Activated CD4-positive, alpha-beta T cell treated with anti-CD3 and anti-CD28 coated beads for 36 hours (primary cell): ENCODE measurements at regions of chr2 and their contacts with region 1.

Region 1: GRCh38 chr2:96085541-96086355 is 30.6 kb downstream of the ADRA2B start:
- DNase-seq: no peak
- ATAC-seq: no peak
- H3K4me3 Mint-ChIP-seq: no peak overlapping the region
- H3K27ac Mint-ChIP-seq: no peak overlapping the region
- H3K4me1 Mint-ChIP-seq: peaks cover 2% of the 10 kb centered on the region
- H3K27me3 Mint-ChIP-seq: peaks cover 2% of the 10 kb centered on the region

Region 2: GRCh38 chr2:96065381-96065930 is 20.3 kb before region 1 on chr2:
- CTCF ChIA-PET with region 1: no interaction called
- POLR2A ChIA-PET with region 1: no interaction called
- intact Hi-C with region 1: no loop called
- DNase-seq: no peak
- ATAC-seq: no peak
- H3K4me3 Mint-ChIP-seq: no peak overlapping the region
- H3K27ac Mint-ChIP-seq: no peak overlapping the region
- H3K4me1 Mint-ChIP-seq: peaks cover 5% of the 10 kb centered on the region
- H3K27me3 Mint-ChIP-seq: no peaks in the 10 kb centered on the region

Region 3: DNA sequence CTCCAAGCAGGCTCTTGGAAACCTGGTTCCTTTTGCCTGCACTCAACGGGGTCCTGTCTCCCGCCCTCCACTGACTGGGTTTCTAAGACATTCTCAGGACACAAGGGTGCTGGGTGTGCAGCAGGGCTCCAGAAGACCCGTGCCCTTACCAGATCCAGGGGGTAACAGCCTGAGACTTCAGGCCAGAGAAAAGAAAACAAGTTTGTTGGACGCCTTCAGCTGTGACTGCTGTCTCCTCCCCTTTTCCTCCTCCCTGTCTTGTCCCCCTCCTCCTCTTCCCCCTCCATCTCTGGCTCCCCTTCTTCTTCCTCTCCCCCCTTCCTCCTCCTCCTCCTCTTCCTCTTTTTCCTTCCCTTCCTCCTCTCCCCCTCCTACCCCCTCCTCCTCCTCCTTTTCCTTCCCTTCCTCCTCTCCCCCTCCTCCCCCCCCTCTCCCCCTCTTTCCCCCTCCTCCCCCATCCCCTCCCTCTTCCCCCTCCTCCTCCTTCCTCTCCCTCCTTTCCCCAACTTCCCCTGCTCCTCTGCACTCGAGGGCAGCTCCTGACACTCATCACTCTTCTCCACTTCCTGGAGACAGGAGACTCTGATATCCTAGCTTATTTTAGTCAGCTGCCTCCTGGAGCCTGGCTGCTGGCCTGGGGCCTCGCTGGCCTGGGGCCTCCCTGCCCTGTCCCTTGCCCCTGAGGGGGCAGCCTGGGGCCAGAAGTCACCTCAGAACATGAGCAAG is 18.2 kb after region 1 on chr2:
- CTCF ChIA-PET with region 1: no interaction called
- POLR2A ChIA-PET with region 1: no interaction called
- intact Hi-C with region 1: loop called in 1 of 2 experiments (anchors 2 kb)
- DNase-seq: no peak
- ATAC-seq: no peak
- H3K4me3 Mint-ChIP-seq: no peak overlapping the region
- H3K27ac Mint-ChIP-seq: no peak overlapping the region
- H3K4me1 Mint-ChIP-seq: no peaks in the 10 kb centered on the region
- H3K27me3 Mint-ChIP-seq: no peaks in the 10 kb centered on the region